Aorta (tissue), 5 donors: ENCODE measurements at regions of chr6 and their contacts with region 1.

Region 1: GRCh38 chr6:48290595-48290994 is 179.6 kb upstream of the PTCHD4 start:
- DNase-seq: no peak
- ATAC-seq: no peak
- H3K4me3 ChIP-seq: no peak overlapping the region
- H3K27ac ChIP-seq: no peak overlapping the region
- H3K4me1 ChIP-seq: no peaks in the 10 kb centered on the region
- H3K27me3 ChIP-seq: no peaks in the 10 kb centered on the region

Region 2: DNA sequence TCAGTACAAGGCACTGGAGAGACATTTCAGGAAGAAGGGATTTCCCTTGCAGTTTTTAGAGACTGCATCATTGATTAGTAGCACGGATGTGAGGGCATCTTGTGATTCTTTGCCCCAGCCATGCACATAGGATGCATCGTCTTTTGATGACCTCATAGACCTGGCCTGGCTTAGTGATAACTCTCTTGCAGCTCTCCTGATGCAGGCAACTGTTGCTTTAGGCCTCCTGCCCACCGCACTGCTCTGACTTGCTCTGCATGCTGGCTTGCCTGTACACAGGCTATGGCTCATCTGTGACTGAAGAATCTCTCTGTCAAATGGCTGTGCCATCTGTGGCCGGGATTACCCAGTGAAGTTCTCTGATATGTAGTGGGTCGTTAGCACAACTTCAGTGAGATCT is 28.1 kb after region 1 on chr6:
- intact Hi-C with region 1: loop called in 1 of 2 experiments (anchors 1 kb)
- DNase-seq: no peak
- ATAC-seq: no peak
- H3K4me3 ChIP-seq: no peak overlapping the region
- H3K27ac ChIP-seq: no peak overlapping the region
- H3K4me1 ChIP-seq: no peaks in the 10 kb centered on the region
- H3K27me3 ChIP-seq: peaks cover 0 to 2% of the 10 kb centered on the region in 2 donors